ENCODE measurements at regions of chr10 and their contacts with region 1.

Region 1: DNA sequence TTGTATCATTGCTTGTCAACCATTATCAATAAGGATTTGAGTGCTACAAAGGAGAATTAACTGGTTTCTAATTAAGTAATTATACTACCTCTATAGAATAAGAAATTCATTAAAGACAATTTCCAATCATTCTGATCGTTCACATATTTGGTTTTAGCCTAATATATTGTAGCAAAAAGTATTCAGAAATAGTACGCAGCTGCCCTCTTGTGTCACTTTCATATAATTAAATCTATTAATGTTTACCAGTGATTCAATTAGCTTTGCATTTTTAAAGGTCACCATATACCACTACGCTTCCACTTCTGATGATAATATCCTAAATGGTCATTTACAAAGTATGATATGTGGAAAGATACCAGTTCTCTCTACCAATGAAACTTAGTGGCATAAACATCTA is 128.3 kb downstream of the NEBL start:
- DNase-seq: no peak

Region 2: GRCh38 chr10:20313665-20314064 is 455.2 kb before region 1 on chr10:
- intact Hi-C with region 1: loop called (anchors 10 kb)
- DNase-seq: peak in 1 of 10 donors; percentile 10

Measured in posterior cingulate gyrus (tissue), 11 donors.